ENCODE measurements at regions of chr15 and their contacts with region 1.

Region 1: DNA sequence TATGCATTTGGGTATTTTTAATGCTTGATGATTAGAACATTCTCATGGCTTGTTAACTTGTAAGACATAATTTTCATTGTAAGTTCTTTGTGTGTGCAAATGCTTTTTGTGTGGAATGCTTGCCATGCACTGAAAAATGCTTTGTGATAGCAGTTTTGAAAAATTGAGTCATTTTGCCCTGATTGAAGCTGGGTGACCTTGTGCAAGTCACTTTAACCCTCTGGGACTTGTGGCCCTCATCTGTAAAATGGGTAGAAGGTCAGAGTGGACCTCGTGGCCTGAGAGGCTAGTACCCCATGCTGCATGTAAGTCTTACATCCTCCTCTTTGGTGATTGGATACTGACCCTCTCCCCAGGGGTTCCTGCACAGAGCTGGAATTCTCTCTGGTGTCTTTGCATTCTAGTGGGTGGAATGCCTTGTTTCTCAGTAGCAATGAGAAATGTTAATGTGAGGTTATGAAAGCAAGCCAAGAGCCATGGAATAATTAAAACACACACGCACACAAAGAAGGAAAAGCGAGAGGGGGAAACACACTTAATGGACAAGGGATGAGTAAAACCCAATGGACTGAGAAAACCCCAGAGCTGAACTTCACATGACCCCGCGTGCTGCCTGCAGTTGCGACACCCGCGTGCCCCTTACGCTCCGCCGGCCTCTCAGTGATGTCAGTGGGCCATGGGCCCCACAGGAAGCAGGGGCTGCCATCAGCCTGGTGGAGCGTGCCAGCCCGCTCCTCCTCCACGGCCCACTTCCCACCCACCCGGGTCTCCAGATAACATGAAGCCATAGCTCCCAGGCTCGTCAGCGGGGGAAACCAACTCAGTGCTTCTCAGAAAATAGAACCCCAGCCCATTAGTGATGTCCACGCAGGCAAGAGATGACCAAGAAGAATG is 44.0 kb downstream of the SMAD3 start:
- DNase-seq: peak; percentile 88 to 91
- ATAC-seq: peak; percentile 75
- H3K4me3 ChIP-seq: no peak overlapping the region
- H3K27ac ChIP-seq: no peak overlapping the region
- H3K4me1 ChIP-seq: peaks cover 8 to 9% of the 10 kb centered on the region in 2 donors
- H3K27me3 ChIP-seq: no peaks in the 10 kb centered on the region

Region 2: DNA sequence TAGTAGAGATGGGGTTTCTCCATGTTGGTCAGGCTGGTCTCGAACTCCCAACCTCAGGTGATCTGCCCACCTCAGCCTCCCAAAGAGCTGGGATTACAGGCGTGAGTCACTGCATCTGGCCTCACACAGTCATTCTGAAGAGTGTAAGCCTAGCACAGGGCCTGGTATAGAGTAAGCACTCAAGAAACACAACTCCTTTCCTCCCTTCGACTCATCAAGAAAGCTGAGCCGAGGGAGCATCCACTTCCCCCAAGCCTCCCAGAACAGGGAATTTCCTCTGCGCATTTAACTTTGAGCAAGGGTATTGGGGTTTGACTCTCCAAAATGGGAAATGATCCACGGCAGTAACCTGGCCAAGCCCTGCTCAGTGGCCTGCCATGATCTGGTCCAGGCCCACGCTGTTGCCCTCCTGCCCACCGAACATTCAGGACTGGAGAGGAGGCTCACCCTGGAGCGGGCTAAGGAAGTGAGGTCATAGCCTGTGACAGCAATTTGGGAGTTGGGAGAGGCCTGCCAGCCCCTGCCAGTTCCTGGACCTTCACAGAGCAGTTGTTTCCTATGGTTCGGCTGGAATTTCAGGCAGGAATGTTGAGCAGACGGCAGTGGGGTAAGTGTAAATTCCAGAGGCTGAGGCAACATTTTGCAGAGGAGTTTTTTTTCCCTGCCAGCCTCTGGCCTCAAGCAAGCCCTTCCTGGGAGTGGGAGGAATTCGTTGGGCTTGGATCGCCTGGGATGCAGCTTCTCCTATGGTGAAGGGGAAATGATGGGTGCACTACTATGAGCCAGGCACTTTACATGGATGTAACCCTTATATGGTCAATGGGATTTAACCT is 65.2 kb before region 1 on chr15:
- intact Hi-C with region 1: loop called in 1 of 2 experiments (anchors 2 kb)
- DNase-seq: peak; percentile 74 to 88
- ATAC-seq: no peak
- H3K4me3 ChIP-seq: no peak overlapping the region
- H3K27ac ChIP-seq: peak overlapping the region; percentile 11 to 90
- H3K4me1 ChIP-seq: peaks cover 2 to 3% of the 10 kb centered on the region in 2 donors
- H3K27me3 ChIP-seq: no peaks in the 10 kb centered on the region

Region 3: GRCh38 chr15:67065444-67066093 is 43.8 kb before region 1 on chr15 and contains the start of gene SMAD3:
- intact Hi-C with region 1: loop called (anchors 5 kb)
- DNase-seq: peak; percentile 95 to 96
- ATAC-seq: peak; percentile 94
- H3K4me3 ChIP-seq: peak within 1 kb of the TSS; percentile 69 to 94
- H3K27ac ChIP-seq: peak within 1 kb of the TSS; percentile 57 to 97
- H3K4me1 ChIP-seq: peaks cover 0 to 13% of the 10 kb centered on the region in 2 donors
- H3K27me3 ChIP-seq: no peaks in the 10 kb centered on the region
- total RNA-seq, gene SMAD3: 65.9 to 90.8 TPM

Region 4: GRCh38 chr15:67150028-67150860 is 40.9 kb after region 1 on chr15:
- intact Hi-C with region 1: loop called in 1 of 2 experiments (anchors 5 kb)
- DNase-seq: peak; percentile 91
- ATAC-seq: peak; percentile 87
- H3K4me3 ChIP-seq: no peak overlapping the region
- H3K27ac ChIP-seq: peak overlapping the region in 1 of 2 donors; percentile 72
- H3K4me1 ChIP-seq: peaks cover 10 to 12% of the 10 kb centered on the region in 2 donors
- H3K27me3 ChIP-seq: no peaks in the 10 kb centered on the region

Measured in aorta (tissue), 5 donors.